SK-N-SH (cell line): ENCODE measurements at regions of chr9 and their contacts with region 1.

Region 1: GRCh38 chr9:18442629-18443491 is 31.1 kb upstream of the ADAMTSL1 start:
- DNase-seq: peak; percentile 62
- H3K4me3 ChIP-seq: peak overlapping the region in 1 of 2 experiments; percentile 31; a peak in 1 of 4 replicates
- H3K27ac ChIP-seq: no peak overlapping the region
- H3K4me1 ChIP-seq: peaks cover 11 to 12% of the 10 kb centered on the region in 2 experiments
- H3K27me3 ChIP-seq: no peaks in the 10 kb centered on the region
- CTCF ChIP-seq: peak; percentile 97
- EP300 ChIP-seq: no peak
- RAD21 ChIP-seq: peak; percentile 74

Region 2: DNA sequence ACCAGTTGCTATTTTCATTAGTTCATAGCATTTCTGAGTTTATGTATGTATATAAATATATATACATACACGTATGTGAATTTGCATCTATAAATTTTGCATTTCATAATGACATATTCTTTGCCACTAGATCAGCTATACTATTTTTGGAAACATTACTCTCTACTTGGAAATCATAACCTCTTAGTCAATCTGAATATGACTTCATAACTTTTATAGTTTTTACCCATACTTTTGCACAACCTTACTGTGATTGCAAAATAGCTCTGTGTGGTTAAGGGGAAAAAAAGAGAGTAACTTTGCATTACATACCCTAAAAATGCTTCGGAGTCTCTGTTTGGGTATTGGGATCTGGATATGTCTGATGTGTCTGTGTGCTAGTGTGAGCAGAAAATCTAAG is 13.8 kb before region 1 on chr9:
- CTCF ChIA-PET with region 1: interaction called, 27 read pairs
- POLR2A ChIA-PET with region 1: interaction called, 3 read pairs
- DNase-seq: no peak
- H3K4me3 ChIP-seq: no peak overlapping the region
- H3K27ac ChIP-seq: no peak overlapping the region
- H3K4me1 ChIP-seq: 0 out of 4 replicates have a peak, but pooled peaks cover 0 to 5% of the 10 kb centered on the region in 2 experiments
- H3K27me3 ChIP-seq: no peaks in the 10 kb centered on the region
- CTCF ChIP-seq: no peak
- EP300 ChIP-seq: no peak
- RAD21 ChIP-seq: no peak

Region 3: GRCh38 chr9:18459958-18460584 is 17.2 kb after region 1 on chr9:
- CTCF ChIA-PET with region 1: interaction called, 54 read pairs
- POLR2A ChIA-PET with region 1: no interaction called
- DNase-seq: no peak
- H3K4me3 ChIP-seq: no peak overlapping the region
- H3K27ac ChIP-seq: peak overlapping the region; percentile 53 to 59; a peak in 3 of 4 replicates
- H3K4me1 ChIP-seq: peaks cover 0 to 4% of the 10 kb centered on the region in 2 experiments; a peak in 2 of 4 replicates
- H3K27me3 ChIP-seq: no peaks in the 10 kb centered on the region
- CTCF ChIP-seq: no peak
- EP300 ChIP-seq: peak in 1 of 2 experiments; percentile 54; a peak in 1 of 4 replicates
- RAD21 ChIP-seq: no peak

Region 4: GRCh38 chr9:18473652-18474279 is 30.9 kb after region 1 on chr9 and contains the start of gene ADAMTSL1:
- CTCF ChIA-PET with region 1: interaction called, 25 read pairs
- POLR2A ChIA-PET with region 1: no interaction called
- DNase-seq: peak; percentile 61
- H3K4me3 ChIP-seq: peak within 1 kb of the TSS; percentile 34 to 81
- H3K27ac ChIP-seq: peak within 1 kb of the TSS; percentile 82 to 91
- H3K4me1 ChIP-seq: peaks cover 0 to 1% of the 10 kb centered on the region in 2 experiments; a peak in 3 of 4 replicates
- H3K27me3 ChIP-seq: no peaks in the 10 kb centered on the region
- CTCF ChIP-seq: no peak
- EP300 ChIP-seq: peak; percentile 47 to 62; a peak in 3 of 4 replicates
- RAD21 ChIP-seq: peak; percentile 13; the same call in 1 of the 2 replicates
- polyA plus RNA-seq, gene ADAMTSL1: 114 and 163 TPM in 2 replicates

Region 5: DNA sequence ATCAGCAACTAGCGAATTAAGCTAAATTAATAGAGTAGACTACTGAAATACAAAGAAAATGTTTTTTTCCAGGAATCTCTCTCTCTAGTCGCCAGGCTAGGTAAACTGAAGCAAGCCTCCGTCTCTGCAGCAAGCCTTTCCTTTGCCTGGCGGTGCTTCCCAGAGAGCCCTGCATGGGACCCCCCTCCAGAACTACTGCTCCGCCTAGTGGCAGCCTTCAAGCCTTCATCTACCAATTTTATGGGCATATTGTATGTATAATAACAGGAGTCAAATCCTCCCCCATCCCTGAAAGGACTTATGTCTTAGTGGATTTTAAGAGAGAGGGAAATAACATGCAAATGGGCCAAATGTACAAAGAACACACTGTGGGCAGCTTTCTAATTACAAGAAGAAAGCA is 348.2 kb after region 1 on chr9:
- CTCF ChIA-PET with region 1: interaction called, 16 read pairs
- POLR2A ChIA-PET with region 1: no interaction called
- DNase-seq: peak; percentile 57
- H3K4me3 ChIP-seq: no peak overlapping the region; a peak in 1 of 4 replicates
- H3K27ac ChIP-seq: no peak overlapping the region
- H3K4me1 ChIP-seq: peaks cover under 1 to 20% of the 10 kb centered on the region in 2 experiments; a peak in 3 of 4 replicates
- H3K27me3 ChIP-seq: no peaks in the 10 kb centered on the region
- CTCF ChIP-seq: peak; percentile 48
- EP300 ChIP-seq: no peak
- RAD21 ChIP-seq: peak; percentile 75

Region 6: GRCh38 chr9:18824095-18824666 is 381.3 kb after region 1 on chr9:
- CTCF ChIA-PET with region 1: interaction called, 10 read pairs
- POLR2A ChIA-PET with region 1: no interaction called
- DNase-seq: peak; percentile 10
- H3K4me3 ChIP-seq: no peak overlapping the region
- H3K27ac ChIP-seq: no peak overlapping the region
- H3K4me1 ChIP-seq: peaks cover 0 to 4% of the 10 kb centered on the region in 2 experiments; a peak in 2 of 4 replicates
- H3K27me3 ChIP-seq: no peaks in the 10 kb centered on the region
- CTCF ChIP-seq: peak; percentile 46
- EP300 ChIP-seq: no peak
- RAD21 ChIP-seq: peak; percentile 71